CD4-positive, alpha-beta memory T cell (primary cell): ENCODE measurements at regions of chr13 and their contacts with region 1.

Region 1: GRCh38 chr13:40666045-40666904 is at the start of gene FOXO1:
- DNase-seq: peak; percentile 89 to 95 (median 94)
- H3K4me3 ChIP-seq: peak within 1 kb of the TSS; percentile 61 to 92
- H3K4me3 Mint-ChIP-seq: peak within 1 kb of the TSS; percentile 91 to 97 (median 94)
- H3K27ac ChIP-seq: peak within 1 kb of the TSS; percentile 86
- H3K27ac Mint-ChIP-seq: peak within 1 kb of the TSS; percentile 92 to 97 (median 94)
- H3K4me1 ChIP-seq: peaks cover 31% of the 10 kb centered on the region
- H3K4me1 Mint-ChIP-seq: peaks cover 22 to 45% (median 30%) of the 10 kb centered on the region in 4 donors
- H3K27me3 ChIP-seq: no peaks in the 10 kb centered on the region
- H3K27me3 Mint-ChIP-seq: no peaks in the 10 kb centered on the region
- total RNA-seq, gene FOXO1: 68.0 to 68.4 TPM

Region 2: DNA sequence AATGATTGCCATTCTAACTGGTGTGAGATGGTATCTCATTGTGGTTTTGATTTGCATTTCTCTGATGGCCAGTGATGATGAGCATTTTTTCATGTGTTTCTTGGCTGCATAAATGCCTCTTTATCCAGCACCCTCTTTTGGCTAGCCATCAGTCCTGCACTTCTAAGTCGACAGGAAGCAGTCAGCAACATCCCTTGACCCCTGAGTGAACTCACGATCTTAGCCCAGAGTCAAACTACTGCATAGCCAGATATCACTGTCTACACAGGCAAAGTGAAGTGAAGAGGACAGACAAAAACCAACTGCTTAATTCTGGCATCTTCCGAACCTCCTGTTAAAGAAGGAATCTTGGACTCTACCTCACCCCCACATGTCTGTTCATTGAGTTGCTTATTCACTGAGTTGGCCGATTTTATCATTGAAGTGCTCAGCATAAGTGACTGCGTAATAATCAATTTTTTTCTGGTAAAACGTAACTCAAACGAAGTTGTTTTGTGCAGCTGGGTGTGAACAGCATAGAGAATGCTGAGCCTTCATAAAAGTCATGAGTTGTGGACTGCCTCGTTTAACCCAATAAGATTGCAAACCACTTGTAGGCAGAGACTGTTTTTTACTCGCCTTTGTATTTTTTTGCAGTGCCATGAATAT is 706.7 kb before region 1 on chr13:
- CTCF ChIA-PET with region 1: no interaction called
- POLR2A ChIA-PET with region 1: no interaction called
- intact Hi-C with region 1: loop called (anchors 5 kb)
- DNase-seq: no peak
- H3K4me3 ChIP-seq: no peak overlapping the region
- H3K4me3 Mint-ChIP-seq: peak overlapping the region in 3 of 8 donors; percentile 5 to 30 (median 21)
- H3K27ac ChIP-seq: no peak overlapping the region
- H3K27ac Mint-ChIP-seq: peak overlapping the region in 2 of 7 donors; percentile 31 to 50
- H3K4me1 ChIP-seq: peaks cover 27% of the 10 kb centered on the region
- H3K4me1 Mint-ChIP-seq: peaks cover 28 to 50% (median 38%) of the 10 kb centered on the region in 4 donors
- H3K27me3 ChIP-seq: no peaks in the 10 kb centered on the region
- H3K27me3 Mint-ChIP-seq: no peaks in the 10 kb centered on the region

Region 3: GRCh38 chr13:40315416-40316064 is 350.7 kb before region 1 on chr13:
- CTCF ChIA-PET with region 1: no interaction called
- POLR2A ChIA-PET with region 1: interaction called, 5 read pairs
- intact Hi-C with region 1: loop called (anchors 1 kb)
- DNase-seq: peak; percentile 61 to 80 (median 73)
- H3K4me3 ChIP-seq: peak overlapping the region in 1 of 2 donors; percentile 7
- H3K4me3 Mint-ChIP-seq: peak overlapping the region; percentile 68 to 87 (median 79)
- H3K27ac ChIP-seq: peak overlapping the region; percentile 6
- H3K27ac Mint-ChIP-seq: peak overlapping the region; percentile 85 to 97 (median 92)
- H3K4me1 ChIP-seq: peaks cover 43% of the 10 kb centered on the region
- H3K4me1 Mint-ChIP-seq: peaks cover 46 to 60% (median 52%) of the 10 kb centered on the region in 4 donors
- H3K27me3 ChIP-seq: no peaks in the 10 kb centered on the region
- H3K27me3 Mint-ChIP-seq: no peaks in the 10 kb centered on the region

Region 4: DNA sequence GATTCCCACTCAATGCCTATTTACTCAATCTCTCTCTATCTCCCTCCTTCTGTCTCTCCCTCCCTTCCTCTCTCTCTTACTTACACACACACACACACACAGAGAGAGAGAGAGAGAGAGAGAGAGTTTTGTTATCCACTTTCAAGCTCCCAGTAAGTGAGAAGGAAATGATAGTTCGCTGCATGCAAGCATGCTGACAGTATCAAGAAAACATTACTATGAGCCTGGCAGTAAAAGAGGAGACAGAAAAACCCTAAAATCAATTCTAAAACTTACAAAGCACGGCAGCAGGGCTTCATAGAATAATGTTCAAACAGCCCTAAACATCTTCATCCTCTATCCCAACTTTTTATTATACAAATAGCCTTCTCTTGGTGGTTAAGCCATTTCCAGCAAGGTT is 171.8 kb before region 1 on chr13:
- CTCF ChIA-PET with region 1: interaction called, 4 read pairs
- POLR2A ChIA-PET with region 1: interaction called, 46 read pairs
- intact Hi-C with region 1: loop called (anchors 2 kb)
- DNase-seq: peak in 3 of 5 donors; percentile 37 to 54 (median 49)
- H3K4me3 ChIP-seq: peak overlapping the region in 1 of 2 donors; percentile 33
- H3K4me3 Mint-ChIP-seq: peak overlapping the region; percentile 71 to 92 (median 84)
- H3K27ac ChIP-seq: peak overlapping the region; percentile 38
- H3K27ac Mint-ChIP-seq: peak overlapping the region; percentile 90 to 98 (median 94)
- H3K4me1 ChIP-seq: peaks cover 74% of the 10 kb centered on the region
- H3K4me1 Mint-ChIP-seq: peaks cover 70 to 92% (median 80%) of the 10 kb centered on the region in 4 donors
- H3K27me3 ChIP-seq: no peaks in the 10 kb centered on the region
- H3K27me3 Mint-ChIP-seq: no peaks in the 10 kb centered on the region

Region 5: GRCh38 chr13:40619479-40619814 is 46.8 kb before region 1 on chr13:
- CTCF ChIA-PET with region 1: no interaction called
- POLR2A ChIA-PET with region 1: interaction called, 49 read pairs
- intact Hi-C with region 1: no loop called
- DNase-seq: no peak
- H3K4me3 ChIP-seq: no peak overlapping the region
- H3K4me3 Mint-ChIP-seq: peak overlapping the region; percentile 40 to 78 (median 69)
- H3K27ac ChIP-seq: peak overlapping the region; percentile 11
- H3K27ac Mint-ChIP-seq: peak overlapping the region; percentile 70 to 97 (median 92)
- H3K4me1 ChIP-seq: peaks cover 94% of the 10 kb centered on the region
- H3K4me1 Mint-ChIP-seq: peaks cover 72 to 98% (median 85%) of the 10 kb centered on the region in 4 donors
- H3K27me3 ChIP-seq: no peaks in the 10 kb centered on the region
- H3K27me3 Mint-ChIP-seq: no peaks in the 10 kb centered on the region

Region 6: GRCh38 chr13:40770934-40771618 is 104.8 kb after region 1 on chr13 and contains the start of gene MRPS31:
- CTCF ChIA-PET with region 1: no interaction called
- POLR2A ChIA-PET with region 1: interaction called, 3 read pairs
- intact Hi-C with region 1: loop called (anchors 1 kb)
- DNase-seq: peak; percentile 91 to 92 (median 92)
- H3K4me3 ChIP-seq: peak within 1 kb of the TSS; percentile 53 to 97
- H3K4me3 Mint-ChIP-seq: peak within 1 kb of the TSS; percentile 97 to 100 (median 99)
- H3K27ac ChIP-seq: peak within 1 kb of the TSS; percentile 79
- H3K27ac Mint-ChIP-seq: peak within 1 kb of the TSS in 6 of 7 donors; percentile 98 to 100 (median 99)
- H3K4me1 ChIP-seq: peaks cover 28% of the 10 kb centered on the region
- H3K4me1 Mint-ChIP-seq: peaks cover 8 to 33% (median 27%) of the 10 kb centered on the region in 4 donors
- H3K27me3 ChIP-seq: no peaks in the 10 kb centered on the region
- H3K27me3 Mint-ChIP-seq: no peaks in the 10 kb centered on the region
- total RNA-seq, gene MRPS31: 37.7 to 39.5 TPM